ENCODE measurements at regions of chr1 and their contacts with region 1.

Region 1: DNA sequence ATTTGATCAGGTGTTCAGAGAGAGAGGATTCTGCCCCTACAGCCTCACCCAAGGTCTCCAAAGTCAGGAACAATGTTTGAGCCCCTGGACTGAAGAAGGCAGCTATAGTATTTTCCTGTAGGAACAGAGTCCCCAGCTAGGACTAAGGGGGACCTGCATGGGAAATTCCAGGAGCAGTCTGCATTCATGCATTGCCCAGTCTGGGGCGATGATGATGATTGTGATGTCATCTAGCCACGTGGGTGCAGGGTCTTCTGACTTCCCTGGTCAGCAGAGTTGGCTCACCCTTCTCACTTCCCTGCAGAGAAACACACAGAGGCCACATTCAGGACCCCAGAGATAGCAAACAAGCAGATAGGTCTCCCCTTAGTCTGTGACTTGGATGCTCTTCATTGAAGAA is 56.5 kb upstream of the ARTN start:
- DNase-seq: no peak
- H3K4me3 Mint-ChIP-seq: no peak overlapping the region
- H3K27ac Mint-ChIP-seq: no peak overlapping the region
- H3K4me1 Mint-ChIP-seq: no peaks in the 10 kb centered on the region
- H3K27me3 Mint-ChIP-seq: no peaks in the 10 kb centered on the region

Region 2: DNA sequence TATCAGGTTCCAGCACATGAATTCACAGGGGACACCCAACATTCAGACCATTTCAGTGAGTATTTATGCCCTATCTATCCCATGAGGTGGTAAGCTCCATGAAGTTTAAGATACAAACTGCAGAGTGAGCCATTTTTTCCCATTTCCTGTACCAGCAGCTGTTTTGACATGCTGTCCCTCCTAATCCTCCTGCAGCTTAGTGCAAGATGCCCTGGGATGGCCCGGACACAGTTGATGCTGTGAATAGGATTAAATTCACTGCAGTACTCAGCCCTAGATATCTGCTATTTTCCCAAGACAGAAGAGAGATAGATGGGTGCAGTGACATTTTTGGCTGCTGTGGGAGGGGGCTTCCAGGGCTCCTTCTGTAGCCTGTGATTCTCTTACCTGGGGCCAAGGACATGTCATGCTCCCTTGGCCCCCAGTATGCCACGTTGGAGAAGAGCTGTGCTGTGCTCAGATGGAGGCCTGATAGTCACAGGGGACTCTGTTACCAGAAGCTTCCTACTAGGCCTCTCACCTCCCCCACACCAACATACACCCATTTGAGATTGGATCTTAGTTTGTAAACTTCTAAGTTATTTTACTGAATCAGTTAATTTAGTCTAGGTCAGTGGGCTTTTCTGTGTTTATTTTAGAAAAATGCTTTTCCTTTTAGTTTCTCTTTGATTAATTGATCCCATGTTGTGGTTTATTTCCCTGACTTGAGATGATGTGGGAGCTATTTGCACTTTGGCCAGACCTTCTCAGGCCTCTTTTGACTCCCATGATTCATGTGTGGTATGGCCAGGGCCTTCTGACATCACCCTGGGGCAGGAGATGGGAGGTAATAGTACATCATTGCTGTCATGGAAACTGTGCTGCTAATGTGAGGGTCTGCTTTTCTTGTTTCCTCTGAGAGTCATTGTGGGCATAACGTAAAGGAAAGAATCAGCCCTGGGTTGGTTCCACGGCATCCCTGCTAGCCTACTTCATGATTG is 77.2 kb before region 1 on chr1:
- CTCF ChIA-PET with region 1: no interaction called
- POLR2A ChIA-PET with region 1: no interaction called
- intact Hi-C with region 1: loop called (anchors 2 kb)
- DNase-seq: no peak
- H3K4me3 Mint-ChIP-seq: no peak overlapping the region
- H3K27ac Mint-ChIP-seq: no peak overlapping the region
- H3K4me1 Mint-ChIP-seq: peaks cover 6% of the 10 kb centered on the region
- H3K27me3 Mint-ChIP-seq: no peaks in the 10 kb centered on the region

Measured in activated CD4-positive, alpha-beta memory T cell treated with anti-CD3 and anti-CD28 coated beads for 36 hours (primary cell).